Breast epithelium (tissue), 4 donors: ENCODE measurements at regions of chr17 and their contacts with region 1.

Region 1: DNA sequence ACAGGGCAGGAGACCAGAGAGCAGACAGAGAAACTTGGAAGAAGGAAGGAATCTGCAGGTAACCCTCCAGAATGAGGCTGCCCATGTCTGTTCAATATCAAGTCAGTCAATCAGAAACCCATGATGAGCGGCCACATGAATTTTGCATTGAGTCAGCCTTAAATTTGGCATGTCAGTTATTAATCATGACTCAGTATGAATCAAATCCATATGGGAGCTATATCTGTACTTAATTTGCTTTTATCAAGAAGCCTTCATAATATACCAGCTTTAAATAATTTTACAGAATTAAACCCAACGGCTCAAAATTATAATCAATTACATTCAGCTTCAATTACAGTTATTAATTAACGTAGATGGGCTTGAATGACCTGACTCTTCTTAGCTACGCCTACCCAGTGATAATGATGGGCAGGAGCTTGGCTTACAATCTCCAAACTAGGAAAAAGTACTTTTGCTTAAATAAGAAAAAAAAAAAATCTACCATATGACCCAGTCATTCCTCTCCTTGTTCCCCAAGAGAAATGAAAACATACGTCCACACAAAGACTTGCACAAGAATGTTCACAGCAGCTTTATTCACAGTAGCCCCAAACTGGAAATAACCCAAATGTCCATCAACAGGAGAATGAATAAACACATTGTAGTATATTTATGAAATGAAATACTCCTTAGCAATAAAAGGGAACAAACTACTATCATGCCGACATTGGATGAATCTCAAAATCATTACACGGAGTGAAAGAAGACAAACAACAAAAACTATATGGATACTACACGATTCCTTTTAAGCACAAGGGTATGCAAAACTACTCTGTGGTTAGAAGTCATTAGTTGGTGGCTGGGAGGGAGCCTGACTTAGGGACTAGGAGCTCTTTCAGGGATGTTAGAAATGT is 48.6 kb downstream of the SLC39A11 start:
- DNase-seq: no peak
- H3K4me3 ChIP-seq: no peak overlapping the region
- H3K27ac ChIP-seq: peak overlapping the region; percentile 29 to 40
- H3K4me1 ChIP-seq: peaks cover 4% of the 10 kb centered on the region in 2 donors
- H3K27me3 ChIP-seq: no peaks in the 10 kb centered on the region
- CTCF ChIP-seq: no peak
- POLR2A ChIP-seq: no peak

Region 2: GRCh38 chr17:72962106-72962505 is 81.8 kb before region 1 on chr17:
- intact Hi-C with region 1: no loop called
- DNase-seq: no peak
- H3K4me3 ChIP-seq: no peak overlapping the region
- H3K27ac ChIP-seq: no peak overlapping the region
- H3K4me1 ChIP-seq: no peaks in the 10 kb centered on the region
- H3K27me3 ChIP-seq: no peaks in the 10 kb centered on the region
- CTCF ChIP-seq: no peak
- POLR2A ChIP-seq: no peak

Region 3: DNA sequence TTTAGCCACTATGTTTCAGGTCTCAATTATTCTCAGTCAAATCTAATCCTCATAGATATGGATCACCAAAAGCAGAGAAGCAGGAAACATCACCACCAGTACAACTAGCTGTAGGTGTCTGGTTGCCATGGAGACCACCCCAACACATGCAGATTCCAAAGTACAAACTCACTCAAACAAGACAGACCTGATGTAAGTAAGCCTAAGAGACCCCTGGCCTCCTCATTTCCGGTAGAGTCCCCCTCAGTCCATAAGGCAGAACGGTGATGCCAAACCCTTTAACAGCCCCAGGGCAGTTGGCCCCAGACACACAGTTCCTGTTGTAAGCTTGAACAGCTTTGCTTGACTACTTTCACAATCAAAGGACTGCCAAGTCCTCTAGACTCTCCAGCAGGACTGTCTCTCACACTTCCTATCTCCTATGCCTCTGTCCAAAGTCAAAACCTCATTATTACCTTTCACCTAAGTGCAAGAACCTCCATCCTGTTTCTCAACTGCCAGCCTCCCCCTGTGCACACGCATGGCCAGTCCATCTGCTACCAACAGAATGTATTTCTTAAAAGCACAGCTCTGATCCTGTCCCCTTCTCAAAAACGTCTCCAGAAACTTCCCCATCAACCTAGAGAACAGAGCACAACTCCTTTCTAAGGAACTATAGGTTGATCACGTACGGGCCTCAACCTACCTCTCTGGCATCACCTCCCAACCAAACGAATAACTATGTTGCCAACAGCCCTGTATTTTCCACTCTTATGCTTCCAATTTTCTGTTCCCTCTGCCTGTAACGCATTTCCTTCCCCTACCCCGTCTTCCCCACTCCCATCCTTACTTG is 24.6 kb after region 1 on chr17:
- intact Hi-C with region 1: loop called (anchors 1 kb)
- DNase-seq: peak in 1 of 2 donors; percentile 60
- H3K4me3 ChIP-seq: no peak overlapping the region
- H3K27ac ChIP-seq: peak overlapping the region; percentile 70 to 84
- H3K4me1 ChIP-seq: peaks cover 0 to 22% of the 10 kb centered on the region in 2 donors
- H3K27me3 ChIP-seq: no peaks in the 10 kb centered on the region
- CTCF ChIP-seq: no peak
- POLR2A ChIP-seq: no peak